A673 (cell line): ENCODE measurements at regions of chr9 and their contacts with region 1.

Region 1: GRCh38 chr9:73132034-73132776 is 19.5 kb upstream of the ANXA1 start:
- DNase-seq: peak; percentile 96
- H3K4me3 ChIP-seq: peak overlapping the region; percentile 45
- H3K27ac ChIP-seq: peak overlapping the region; percentile 93
- H3K4me1 ChIP-seq: peaks cover 35% of the 10 kb centered on the region
- H3K27me3 ChIP-seq: no peaks in the 10 kb centered on the region
- CTCF ChIP-seq: no peak

Region 2: GRCh38 chr9:73143606-73144328 is 11.6 kb after region 1 on chr9:
- CTCF ChIA-PET with region 1: no interaction called
- POLR2A ChIA-PET with region 1: interaction called, 13 read pairs
- intact Hi-C with region 1: no loop called
- DNase-seq: peak; percentile 91
- H3K4me3 ChIP-seq: no peak overlapping the region
- H3K27ac ChIP-seq: peak overlapping the region; percentile 93
- H3K4me1 ChIP-seq: peaks cover 61% of the 10 kb centered on the region
- H3K27me3 ChIP-seq: no peaks in the 10 kb centered on the region
- CTCF ChIP-seq: no peak

Region 3: DNA sequence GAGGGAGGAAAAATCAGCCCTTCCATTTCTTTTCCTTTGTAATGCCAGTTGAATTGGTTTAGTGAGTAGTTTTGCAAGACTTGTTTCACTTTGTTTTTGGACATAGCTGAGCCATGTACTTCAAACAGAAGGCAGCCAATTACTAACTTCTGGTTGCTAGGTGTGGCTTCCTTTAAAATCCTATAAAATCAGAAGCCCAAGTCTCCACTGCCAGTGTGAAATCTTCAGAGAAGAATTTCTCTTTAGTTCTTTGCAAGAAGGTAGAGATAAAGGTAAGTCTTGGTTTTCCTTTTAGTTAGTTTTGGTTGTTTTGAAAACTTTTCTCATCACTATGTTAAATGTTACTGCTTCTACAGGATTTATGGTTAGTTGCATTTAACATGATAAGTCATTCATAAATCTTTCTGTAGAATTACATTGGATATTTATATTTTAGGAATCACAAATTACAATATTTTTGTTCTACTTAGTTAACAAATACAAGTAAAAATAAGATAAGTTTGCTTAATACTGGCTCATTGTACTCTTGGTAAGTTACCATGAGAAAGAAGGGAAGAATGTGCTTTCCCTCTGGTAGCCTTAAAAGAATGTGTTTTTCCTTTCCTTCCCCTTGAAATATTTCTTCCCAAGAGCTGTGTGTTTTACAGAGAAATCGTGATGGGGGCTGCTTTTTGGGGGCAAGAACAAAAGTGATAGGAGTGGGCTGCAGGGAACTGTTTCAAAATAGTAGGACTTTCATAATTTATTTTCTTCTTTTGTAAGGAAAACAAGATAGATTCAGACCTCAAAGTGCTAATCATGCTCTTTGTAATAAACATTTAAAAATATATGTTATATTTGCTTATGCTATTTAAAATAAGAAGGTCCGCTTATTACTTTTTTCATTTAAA is 19.7 kb after region 1 on chr9 and contains the start of gene ANXA1:
- CTCF ChIA-PET with region 1: no interaction called
- POLR2A ChIA-PET with region 1: no interaction called
- intact Hi-C with region 1: loop called (anchors 2 kb)
- DNase-seq: peak; percentile 81
- H3K4me3 ChIP-seq: peak within 1 kb of the TSS; percentile 65
- H3K27ac ChIP-seq: peak within 1 kb of the TSS; percentile 90
- H3K4me1 ChIP-seq: peaks cover 61% of the 10 kb centered on the region
- H3K27me3 ChIP-seq: no peaks in the 10 kb centered on the region
- CTCF ChIP-seq: no peak
- total RNA-seq, gene ANXA1: 338 and 430 TPM in 2 replicates